Psoas muscle (tissue), 8 donors: ENCODE measurements at regions of chr9 and their contacts with region 1.

Region 1: DNA sequence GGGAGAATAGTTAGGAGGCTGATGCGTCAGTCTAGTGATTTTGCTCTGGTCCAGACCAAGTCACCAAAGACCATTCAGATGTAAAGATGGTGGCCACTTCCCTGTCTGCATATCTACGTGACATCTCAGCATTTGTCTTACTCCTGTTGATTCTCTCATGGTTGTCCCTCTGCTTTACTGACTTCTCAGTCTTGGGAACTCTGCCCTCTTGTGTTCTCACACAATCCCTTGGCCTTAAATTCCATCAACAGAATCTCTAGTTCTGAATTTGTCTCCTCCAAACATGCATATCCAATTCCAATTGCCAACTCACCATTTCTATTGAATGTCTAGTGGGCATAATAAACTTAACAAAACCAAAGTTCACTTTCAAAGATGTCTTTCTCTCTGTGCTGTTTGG is 147.8 kb downstream of the SLC24A2 start:
- DNase-seq: no peak
- ATAC-seq: no peak
- H3K4me3 ChIP-seq: no peak overlapping the region
- H3K27ac ChIP-seq: no peak overlapping the region
- H3K4me1 ChIP-seq: no peaks in the 10 kb centered on the region
- H3K27me3 ChIP-seq: no peaks in the 10 kb centered on the region
- CTCF ChIP-seq: no peak

Region 2: DNA sequence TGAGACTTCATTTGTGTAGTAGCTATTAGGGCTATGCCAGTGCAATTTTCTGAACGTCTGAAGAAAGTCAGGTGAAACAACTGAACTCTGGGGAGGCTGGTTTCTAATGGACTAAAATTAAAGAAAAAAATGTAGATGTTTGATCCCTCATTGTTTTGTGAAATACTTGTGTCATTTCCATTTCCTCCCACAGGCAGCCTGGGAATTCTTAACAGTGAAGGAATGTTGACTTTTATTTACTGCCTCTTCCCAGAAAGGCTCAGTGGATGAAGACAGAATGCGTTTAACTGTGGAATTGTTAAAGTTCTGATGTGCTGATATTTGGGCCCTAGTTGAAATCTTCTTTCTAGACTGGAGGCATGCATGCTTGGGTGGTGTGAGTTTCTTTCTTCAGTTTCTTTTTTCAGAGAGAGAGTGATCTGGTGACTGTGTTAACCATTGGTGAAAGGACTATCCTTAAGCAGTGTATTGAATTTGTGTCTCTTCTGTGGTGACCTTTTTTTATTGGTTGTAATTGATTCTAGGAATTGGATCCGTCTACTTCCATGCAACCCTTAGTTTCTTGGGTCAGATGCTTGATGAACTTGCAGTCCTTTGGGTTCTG is 216.8 kb before region 1 on chr9:
- intact Hi-C with region 1: no loop called
- DNase-seq: no peak
- ATAC-seq: no peak
- H3K4me3 ChIP-seq: no peak overlapping the region
- H3K27ac ChIP-seq: no peak overlapping the region
- H3K4me1 ChIP-seq: no peaks in the 10 kb centered on the region
- H3K27me3 ChIP-seq: no peaks in the 10 kb centered on the region
- CTCF ChIP-seq: no peak

Region 3: DNA sequence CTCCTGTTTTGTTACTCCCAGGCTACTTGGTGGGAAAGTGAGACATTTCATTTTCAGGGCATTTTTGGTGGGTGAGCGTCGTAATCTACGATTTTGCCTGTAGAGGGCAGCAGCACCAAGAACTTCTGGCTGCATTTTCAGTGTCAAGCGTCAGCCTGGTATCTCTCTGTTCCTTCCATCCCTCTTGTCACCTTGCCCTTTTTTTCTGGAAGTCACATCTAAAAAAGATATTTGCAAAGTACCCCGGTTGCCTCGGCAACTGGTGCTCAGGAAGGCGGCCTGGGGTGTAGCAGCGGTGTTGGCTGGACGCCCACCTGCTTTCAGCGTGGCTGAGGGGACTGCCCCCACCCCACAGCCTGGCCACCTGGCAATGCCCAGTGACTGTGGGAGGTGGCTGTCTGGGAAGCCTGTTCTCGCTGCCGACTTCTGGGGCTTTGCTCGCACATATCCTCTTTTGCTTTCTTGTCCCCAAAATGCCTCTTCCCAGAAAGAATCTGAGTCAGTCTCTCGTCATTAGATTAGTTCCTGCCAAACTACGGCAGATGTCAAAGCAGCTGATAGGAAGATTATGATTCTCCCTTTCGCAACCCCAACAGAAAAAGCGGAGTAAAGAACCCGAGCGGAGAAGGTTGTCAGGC is 147.8 kb before region 1 on chr9:
- intact Hi-C with region 1: loop called in 1 of 2 experiments (anchors 10 kb)
- DNase-seq: peak; percentile 76 to 77
- ATAC-seq: peak; percentile 57 to 84 (median 76)
- H3K4me3 ChIP-seq: peak overlapping the region; percentile 51
- H3K27ac ChIP-seq: peak overlapping the region; percentile 32
- H3K4me1 ChIP-seq: no peaks in the 10 kb centered on the region
- H3K27me3 ChIP-seq: no peaks in the 10 kb centered on the region
- CTCF ChIP-seq: peak; percentile 60